ENCODE measurements at regions of chr3 and their contacts with region 1.

Region 1: DNA sequence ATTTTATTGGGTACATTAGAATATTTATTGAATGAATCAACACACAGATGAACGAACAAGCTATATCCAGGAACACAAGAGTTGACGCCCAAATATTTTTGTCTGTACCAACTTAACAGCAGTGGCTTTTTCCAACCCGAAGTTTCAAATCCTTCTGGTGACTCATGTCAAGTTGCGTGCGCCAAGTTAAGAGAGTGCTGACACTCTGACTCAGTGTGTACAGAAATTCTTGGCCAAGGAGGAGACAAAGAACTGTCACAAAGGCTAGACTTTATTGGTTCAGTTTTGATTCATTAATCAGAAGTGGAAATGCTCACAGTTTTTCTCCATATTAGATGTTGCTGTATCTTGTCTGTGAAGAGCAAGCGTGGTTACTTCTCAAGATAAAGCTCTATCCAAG is 59.6 kb upstream of the TSC22D2 start:
- DNase-seq: peak in 1 of 5 donors; percentile 31
- ATAC-seq: peak; percentile 75 to 93 (median 82)
- H3K4me3 ChIP-seq: no peak overlapping the region
- H3K27ac ChIP-seq: peak overlapping the region; percentile 5 to 85 (median 74)
- H3K4me1 ChIP-seq: peaks cover 0 to 48% (median 9%) of the 10 kb centered on the region in 12 donors
- H3K27me3 ChIP-seq: no peaks in the 10 kb centered on the region
- CTCF ChIP-seq: no peak
- POLR2A ChIP-seq: no peak

Region 2: DNA sequence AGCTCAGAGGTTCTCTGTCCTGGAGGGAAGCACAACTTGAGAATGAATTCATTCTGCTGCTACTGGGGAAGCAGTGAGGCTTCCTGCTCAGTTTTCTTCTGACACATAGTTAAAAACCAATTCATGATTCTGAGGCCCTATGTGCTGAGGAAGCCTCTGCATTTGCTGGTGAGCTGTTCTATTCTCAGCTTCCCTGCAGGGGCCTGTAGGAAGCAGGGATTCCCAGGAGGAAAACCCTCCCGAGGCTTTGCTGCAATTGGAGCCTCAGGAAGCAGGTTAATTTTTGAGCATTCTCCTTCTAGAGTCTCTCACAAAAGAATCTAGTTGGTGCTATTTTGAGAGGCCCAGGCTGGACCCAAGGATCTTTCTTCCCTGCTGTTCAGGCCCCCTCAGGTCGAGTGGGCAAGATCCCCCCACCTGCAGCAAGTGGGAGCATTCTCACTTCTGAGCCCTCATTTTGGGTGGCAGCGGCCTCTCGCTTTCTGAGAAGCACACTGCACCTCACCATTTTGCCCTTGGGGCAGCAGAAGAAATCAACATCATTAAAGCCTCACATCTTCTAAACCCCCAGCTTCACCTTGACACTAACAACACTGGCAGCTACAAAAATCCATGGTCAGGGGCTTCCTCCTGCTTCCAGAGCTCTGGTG is 137.9 kb before region 1 on chr3:
- intact Hi-C with region 1: no loop called
- DNase-seq: no peak
- ATAC-seq: no peak
- H3K4me3 ChIP-seq: no peak overlapping the region
- H3K27ac ChIP-seq: no peak overlapping the region
- H3K4me1 ChIP-seq: peaks cover 0 to 3% (median under 1%) of the 10 kb centered on the region in 12 donors
- H3K27me3 ChIP-seq: no peaks in the 10 kb centered on the region
- CTCF ChIP-seq: no peak
- POLR2A ChIP-seq: no peak

Region 3: GRCh38 chr3:150253622-150254021 is 94.9 kb before region 1 on chr3:
- intact Hi-C with region 1: loop called in 2 of 10 experiments (anchors 2 to 10 kb)
- DNase-seq: peak in 4 of 5 donors; percentile 19 to 27 (median 26)
- ATAC-seq: peak in 1 of 4 donors; percentile 22
- H3K4me3 ChIP-seq: no peak overlapping the region
- H3K27ac ChIP-seq: peak overlapping the region in 3 of 12 donors; percentile 17 to 88 (median 86)
- H3K4me1 ChIP-seq: peaks cover 0 to 53% (median 5%) of the 10 kb centered on the region in 12 donors
- H3K27me3 ChIP-seq: no peaks in the 10 kb centered on the region
- CTCF ChIP-seq: no peak
- POLR2A ChIP-seq: no peak

Region 4: DNA sequence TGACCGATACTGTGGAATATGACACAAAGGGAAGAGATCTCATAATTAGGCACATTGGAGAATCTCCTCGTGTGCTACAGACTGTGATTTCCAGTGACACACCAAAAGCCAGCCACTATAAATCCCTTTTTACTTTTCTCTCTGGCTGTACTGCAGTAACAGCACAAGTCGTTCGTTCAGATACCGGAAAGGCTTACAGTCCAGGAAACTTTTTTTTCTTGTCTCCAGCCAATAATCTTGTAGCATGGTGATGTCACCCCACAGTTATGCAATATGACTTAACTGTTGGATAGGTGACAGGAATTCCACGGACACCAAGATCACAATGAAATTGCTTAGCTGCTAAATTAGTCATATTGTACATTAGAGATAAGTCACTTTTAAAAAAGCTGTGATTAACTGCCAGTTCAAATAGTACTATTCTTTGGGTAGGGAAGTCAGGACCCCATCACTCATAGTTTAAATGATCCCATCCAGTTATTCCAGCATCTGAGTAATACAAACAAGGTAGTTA is 23.3 kb after region 1 on chr3:
- intact Hi-C with region 1: loop called in 1 of 10 experiments (anchors 2 kb)
- DNase-seq: peak in 3 of 5 donors; percentile 30 to 80 (median 75)
- ATAC-seq: peak; percentile 94 to 96 (median 95)
- H3K4me3 ChIP-seq: peak overlapping the region in 11 of 12 donors; percentile 11 to 41 (median 28)
- H3K27ac ChIP-seq: peak overlapping the region; percentile 76 to 95 (median 86)
- H3K4me1 ChIP-seq: peaks cover 6 to 40% (median 24%) of the 10 kb centered on the region in 12 donors
- H3K27me3 ChIP-seq: no peaks in the 10 kb centered on the region
- CTCF ChIP-seq: no peak
- POLR2A ChIP-seq: peak in 1 of 2 donors; percentile 32

Region 5: DNA sequence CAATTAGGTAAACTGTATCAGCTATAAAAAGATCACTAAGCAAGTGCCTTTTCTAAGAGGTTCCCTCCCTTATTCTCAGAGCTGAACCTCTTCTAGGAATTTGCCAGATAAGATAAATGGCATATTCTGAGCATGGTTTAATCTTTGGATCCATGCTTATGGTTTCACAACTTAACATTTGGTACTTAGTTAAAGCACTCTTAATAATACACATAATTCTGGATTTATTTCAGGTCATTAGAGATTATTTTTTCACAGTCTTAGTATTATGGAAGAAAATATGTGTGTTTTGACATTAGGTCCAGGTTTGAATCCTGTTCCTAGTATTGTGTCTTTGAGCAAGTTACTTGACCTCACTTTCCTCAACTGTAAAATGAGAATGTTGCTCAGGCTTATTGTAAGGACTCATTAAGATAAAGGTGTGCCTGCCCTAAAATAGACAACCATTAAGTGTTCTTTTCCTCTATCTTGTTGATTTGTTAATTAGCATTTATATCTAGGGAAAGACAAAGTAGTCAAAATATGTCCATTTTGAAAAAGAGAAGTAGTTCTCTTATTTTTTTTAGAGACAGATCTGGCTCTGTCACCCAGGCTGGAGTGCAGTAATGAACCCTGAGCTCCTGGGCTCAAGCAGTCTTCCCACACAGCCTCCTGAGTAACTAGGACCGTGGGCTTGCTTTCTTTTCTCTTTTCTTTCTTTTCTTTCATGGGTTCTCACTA is 103.0 kb after region 1 on chr3:
- intact Hi-C with region 1: no loop called
- DNase-seq: no peak
- ATAC-seq: peak in 1 of 4 donors; percentile 41
- H3K4me3 ChIP-seq: no peak overlapping the region
- H3K27ac ChIP-seq: peak overlapping the region in 3 of 12 donors; percentile 4 to 28 (median 16)
- H3K4me1 ChIP-seq: peaks cover 7 to 73% (median 40%) of the 10 kb centered on the region in 12 donors
- H3K27me3 ChIP-seq: no peaks in the 10 kb centered on the region
- CTCF ChIP-seq: no peak
- POLR2A ChIP-seq: no peak

Region 6: DNA sequence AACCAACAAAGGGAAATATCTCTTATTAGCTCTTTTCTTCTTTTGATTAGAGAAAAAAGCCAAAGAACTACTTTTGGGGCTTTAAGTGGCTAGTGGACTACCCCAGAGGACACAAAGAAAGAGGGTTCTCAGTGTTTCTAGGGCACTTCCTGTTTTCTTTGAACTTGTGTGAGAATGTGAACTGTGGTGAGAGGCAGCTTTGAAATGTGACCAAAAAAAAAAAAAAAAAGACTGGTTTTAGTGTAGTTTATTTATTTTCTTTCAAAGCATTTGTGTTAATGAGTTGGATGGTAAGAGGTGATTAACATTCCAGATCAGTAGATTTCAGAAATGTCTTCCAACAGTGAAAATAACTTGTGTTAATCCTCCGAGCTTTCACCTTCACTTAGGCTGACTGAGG is 287.0 kb after region 1 on chr3:
- intact Hi-C with region 1: no loop called
- DNase-seq: no peak
- ATAC-seq: no peak
- H3K4me3 ChIP-seq: no peak overlapping the region
- H3K27ac ChIP-seq: no peak overlapping the region
- H3K4me1 ChIP-seq: peaks cover 0 to 9% (median 0%) of the 10 kb centered on the region in 12 donors
- H3K27me3 ChIP-seq: no peaks in the 10 kb centered on the region
- CTCF ChIP-seq: no peak
- POLR2A ChIP-seq: no peak

Measured in heart left ventricle (tissue), 16 donors.